ENCODE measurements at regions of chr16 and their contacts with region 1.

Region 1: GRCh38 chr16:87062569-87063442 is 254.4 kb downstream of the C16orf95 start:
- DNase-seq: peak; percentile 5
- H3K4me3 ChIP-seq: no peak overlapping the region
- H3K27ac ChIP-seq: no peak overlapping the region
- H3K4me1 ChIP-seq: no peaks in the 10 kb centered on the region
- H3K27me3 ChIP-seq: peaks cover 0 to 82% (median 35%) of the 10 kb centered on the region in 3 donors
- CTCF ChIP-seq: peak; percentile 34 to 78 (median 54)
- EP300 ChIP-seq: no peak
- POLR2A ChIP-seq: no peak

Region 2: DNA sequence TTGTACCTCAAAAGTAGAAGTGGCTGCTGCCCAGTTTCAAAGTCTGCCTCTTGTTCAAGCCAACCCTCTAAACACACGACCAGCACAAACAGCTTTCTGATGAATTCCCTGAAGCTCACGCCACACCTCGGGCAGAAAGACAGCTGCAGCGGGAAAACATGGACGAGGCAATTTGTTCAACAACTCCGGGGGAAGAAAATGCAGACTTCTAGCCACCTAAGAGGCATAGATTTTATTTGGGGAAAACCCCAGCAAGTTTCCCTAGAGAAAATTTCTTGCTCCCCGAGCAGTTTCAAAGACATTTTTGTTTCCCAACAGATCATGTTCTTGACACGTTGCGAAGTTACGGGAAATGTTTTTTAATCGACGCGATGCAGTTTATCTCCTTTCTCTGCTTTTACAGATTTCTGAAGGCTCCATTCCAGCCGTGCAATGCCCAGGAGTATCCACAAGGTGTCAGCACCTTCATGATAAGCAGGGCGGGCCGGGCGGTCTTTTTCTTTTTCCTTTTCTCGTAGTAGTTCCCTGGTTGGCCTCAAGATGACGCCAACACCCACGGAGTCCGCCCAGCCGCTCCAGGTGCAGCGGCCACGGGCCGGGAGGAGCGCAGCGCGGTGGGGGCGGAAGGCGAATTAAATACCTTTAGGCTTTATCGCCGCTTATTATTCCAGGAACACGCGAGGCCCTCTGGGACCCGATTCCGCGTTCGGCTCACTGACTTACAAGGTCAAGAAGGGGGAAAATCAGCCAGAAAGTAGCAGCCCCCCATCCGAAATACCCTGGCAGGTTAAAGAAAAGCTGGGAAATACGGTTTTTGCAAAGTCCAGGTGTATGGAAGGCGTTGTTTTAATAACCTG is 499.1 kb before region 1 on chr16:
- intact Hi-C with region 1: loop called (anchors 1 kb)
- DNase-seq: peak; percentile 95
- H3K4me3 ChIP-seq: no peak overlapping the region
- H3K27ac ChIP-seq: no peak overlapping the region
- H3K4me1 ChIP-seq: peaks cover 0 to 23% (median 19%) of the 10 kb centered on the region in 4 donors
- H3K27me3 ChIP-seq: peaks cover 42 to 97% (median 61%) of the 10 kb centered on the region in 3 donors
- CTCF ChIP-seq: peak; percentile 100
- EP300 ChIP-seq: no peak
- POLR2A ChIP-seq: no peak

Region 3: DNA sequence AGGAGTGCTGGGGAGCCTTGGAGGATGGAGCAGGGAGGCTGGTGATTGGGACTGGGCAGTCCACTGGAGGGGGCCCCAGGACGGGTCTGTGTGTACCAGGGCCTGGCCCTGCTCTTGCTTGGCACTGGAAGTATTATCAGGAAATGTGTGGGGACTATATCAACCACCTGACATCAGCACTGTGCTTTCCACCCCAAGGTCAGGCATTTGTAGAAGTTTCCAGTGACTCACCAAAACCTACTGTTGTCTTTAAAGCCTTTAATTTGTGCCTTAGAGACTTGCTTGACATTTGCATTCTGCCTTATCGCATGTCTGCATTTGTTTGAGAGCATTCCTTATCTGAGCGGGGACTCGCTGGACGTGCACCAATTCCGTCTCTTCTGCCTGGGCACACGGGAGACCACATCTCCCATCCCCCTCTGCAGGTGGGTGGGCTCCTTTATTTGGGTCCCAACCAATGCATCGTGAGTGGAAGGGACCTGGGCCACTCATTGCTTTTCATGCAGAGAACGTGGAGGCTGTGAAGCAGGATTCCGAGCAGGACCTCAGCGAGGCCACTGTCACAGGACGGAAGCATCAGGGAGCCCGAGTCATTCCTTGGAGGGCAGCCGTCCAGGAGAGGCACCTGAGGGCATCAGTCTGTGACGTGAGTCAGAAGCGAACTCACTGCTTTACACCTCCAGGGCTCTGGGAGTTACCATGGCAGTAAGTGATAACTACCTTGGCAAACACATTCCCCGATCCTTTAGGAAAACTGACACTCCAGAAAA is 161.1 kb before region 1 on chr16:
- intact Hi-C with region 1: no loop called
- DNase-seq: no peak
- H3K4me3 ChIP-seq: no peak overlapping the region
- H3K27ac ChIP-seq: no peak overlapping the region
- H3K4me1 ChIP-seq: peaks cover 0 to 5% (median 2%) of the 10 kb centered on the region in 4 donors
- H3K27me3 ChIP-seq: peaks cover 0 to 57% (median 35%) of the 10 kb centered on the region in 3 donors
- CTCF ChIP-seq: no peak
- EP300 ChIP-seq: no peak
- POLR2A ChIP-seq: no peak

Region 4: DNA sequence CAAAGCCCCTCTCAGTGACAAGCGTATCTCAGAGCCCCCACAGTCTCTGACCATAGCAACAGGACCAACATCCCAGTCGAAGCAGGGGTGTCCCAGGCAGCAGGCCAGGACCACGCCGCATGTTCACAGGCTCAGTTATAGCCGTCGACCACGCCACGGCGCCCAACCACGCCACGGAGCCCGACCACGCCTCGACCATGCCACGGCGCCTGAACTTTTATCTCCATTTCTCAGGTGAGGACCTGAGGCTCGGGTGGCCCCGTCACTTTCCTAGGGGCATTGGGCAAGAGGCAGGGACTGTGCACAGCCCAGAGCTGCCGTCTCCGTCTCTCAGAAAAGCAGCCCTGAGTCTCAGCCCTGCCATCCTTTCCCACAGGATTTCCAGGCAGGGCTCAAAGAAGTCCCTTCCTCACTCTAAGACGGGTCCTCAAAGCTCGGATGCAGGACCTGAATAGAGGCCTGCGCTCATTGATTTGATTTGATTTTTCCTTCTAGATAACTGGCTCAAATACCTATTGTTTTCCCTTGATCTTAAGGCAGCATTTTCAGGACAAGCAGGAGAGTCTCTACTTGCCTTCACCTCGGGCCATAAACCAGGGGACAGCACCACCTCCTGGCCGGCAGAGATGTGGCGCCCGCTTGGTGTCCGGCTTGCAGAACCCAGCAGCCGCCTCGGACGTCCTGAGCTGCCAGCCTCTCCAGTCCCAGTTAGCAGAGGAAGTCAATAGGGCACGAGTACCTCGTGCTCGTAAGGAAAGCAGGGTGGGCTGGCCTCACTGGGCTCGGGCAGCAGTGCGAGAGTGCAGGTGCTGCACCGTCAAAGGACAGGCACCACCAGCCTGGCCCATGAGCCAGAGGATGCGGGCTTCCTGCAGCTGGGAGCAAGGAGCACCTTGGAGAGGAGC is 215.6 kb after region 1 on chr16:
- intact Hi-C with region 1: loop called (anchors 10 kb)
- DNase-seq: peak; percentile 85
- H3K4me3 ChIP-seq: no peak overlapping the region
- H3K27ac ChIP-seq: no peak overlapping the region
- H3K4me1 ChIP-seq: peaks cover 0 to 2% (median 0%) of the 10 kb centered on the region in 4 donors
- H3K27me3 ChIP-seq: peaks cover 0 to 40% (median 5%) of the 10 kb centered on the region in 3 donors
- CTCF ChIP-seq: peak; percentile 56 to 79 (median 68)
- EP300 ChIP-seq: no peak
- POLR2A ChIP-seq: no peak

Measured in sigmoid colon (tissue), 7 donors.